Dorsolateral prefrontal cortex (tissue), 120 donors: ENCODE measurements at regions of chr7 and their contacts with region 1.

Region 1: GRCh38 chr7:73667344-73668102 is at the start of gene VPS37D:
- DNase-seq: peak; percentile 72 to 93 (median 84)
- H3K4me3 ChIP-seq: peak within 1 kb of the TSS; percentile 41 to 84 (median 63)
- H3K27ac ChIP-seq: peak within 1 kb of the TSS in 8 of 59 donors; percentile 8 to 66 (median 52)
- H3K27me3 ChIP-seq: no peaks in the 10 kb centered on the region
- CTCF ChIP-seq: peak; percentile 30 to 89 (median 65)
- total RNA-seq, gene VPS37D: 5.8 to 17.7 (median 9.9) TPM

Region 2: GRCh38 chr7:73606801-73607691 is 60.5 kb before region 1 on chr7:
- intact Hi-C with region 1: loop called (anchors 2 kb)
- DNase-seq: peak in 4 of 10 donors; percentile 50 to 72 (median 58)
- H3K4me3 ChIP-seq: peak overlapping the region in 38 of 59 donors; percentile 2 to 58 (median 38)
- H3K27ac ChIP-seq: no peak overlapping the region
- H3K27me3 ChIP-seq: no peaks in the 10 kb centered on the region
- CTCF ChIP-seq: peak; percentile 54 to 98 (median 94)

Region 3: DNA sequence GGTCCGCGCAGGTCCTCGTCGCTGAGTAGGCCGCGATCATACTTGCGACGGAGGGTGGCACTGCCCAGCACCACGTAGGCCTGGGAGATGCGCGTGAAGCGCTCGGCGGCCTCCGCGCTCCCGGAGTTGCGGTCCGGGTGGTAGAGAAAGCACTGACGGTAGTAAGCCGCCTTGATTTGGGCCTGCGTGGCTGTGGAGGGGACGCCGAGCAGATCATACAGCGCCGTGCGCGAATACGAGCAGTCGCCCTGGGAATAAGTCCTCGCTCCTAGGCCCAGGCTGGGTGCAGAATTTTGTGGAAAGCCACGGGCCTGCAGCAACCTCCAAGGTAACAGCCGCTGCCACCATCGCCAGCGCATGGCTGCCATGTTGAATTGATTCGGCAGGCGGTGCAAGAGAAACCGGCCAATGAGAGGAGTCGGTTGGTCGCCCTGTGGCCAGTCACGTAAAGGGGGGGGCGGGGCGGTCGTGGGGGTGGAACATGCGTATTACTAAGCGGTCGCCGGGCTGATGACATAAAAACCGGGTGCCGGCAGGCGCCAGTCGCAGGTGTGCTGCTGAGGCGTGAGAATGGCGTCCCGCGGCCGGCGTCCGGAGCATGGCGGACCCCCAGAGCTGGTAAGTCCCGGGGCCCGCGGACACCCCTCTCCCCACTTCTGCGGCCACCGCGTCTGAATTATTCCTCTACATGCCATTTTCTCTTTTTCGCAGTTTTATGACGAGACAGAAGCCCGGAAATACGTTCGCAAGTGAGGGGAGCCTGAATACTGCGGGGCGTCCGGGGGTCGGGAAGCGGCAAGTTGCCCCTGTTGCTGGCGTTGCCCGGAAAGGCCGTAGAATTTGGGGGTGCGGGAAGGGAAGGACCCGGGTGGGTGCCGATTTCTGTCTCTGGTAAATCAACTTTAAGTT is 15.8 kb after region 1 on chr7 and contains the starts of genes BUD23 and DNAJC30:
- intact Hi-C with region 1: loop called in 1 of 2 experiments (anchors 2 kb)
- DNase-seq: peak; percentile 90 to 96 (median 94)
- H3K4me3 ChIP-seq: peak within 1 kb of the TSS; percentile 67 to 100 (median 96)
- H3K27ac ChIP-seq: peak within 1 kb of the TSS in 58 of 59 donors; percentile 13 to 94 (median 80)
- H3K27me3 ChIP-seq: no peaks in the 10 kb centered on the region
- CTCF ChIP-seq: peak in 42 of 56 donors; percentile 8 to 53 (median 33)
- total RNA-seq, gene BUD23: 32.0 to 61.9 (median 46.1) TPM
- total RNA-seq, gene DNAJC30: 9.5 to 21.4 (median 15.8) TPM

Region 4: GRCh38 chr7:73718905-73719805 is 51.6 kb after region 1 on chr7 and contains the start of gene STX1A:
- intact Hi-C with region 1: loop called (anchors 5 kb)
- DNase-seq: peak in 6 of 10 donors; percentile 48 to 85 (median 73)
- H3K4me3 ChIP-seq: peak within 1 kb of the TSS; percentile 45 to 94 (median 83)
- H3K27ac ChIP-seq: peak within 1 kb of the TSS in 27 of 59 donors; percentile 1 to 81 (median 54)
- H3K27me3 ChIP-seq: no peaks in the 10 kb centered on the region
- CTCF ChIP-seq: no peak
- total RNA-seq, gene STX1A: 59.6 to 264 (median 153) TPM